GM12878 (cell line): ENCODE measurements at regions of chr1 and their contacts with region 1.

Region 1: GRCh38 chr1:61741711-61742619 is at the start of gene PATJ:
- DNase-seq: no peak
- ATAC-seq: peak; percentile 91
- H3K4me3 ChIP-seq: peak within 1 kb of the TSS; percentile 83
- H3K27ac ChIP-seq: no peak within 1 kb of the TSS
- H3K4me1 ChIP-seq: peaks cover 6% of the 10 kb centered on the region
- H3K27me3 ChIP-seq: no peaks in the 10 kb centered on the region
- CTCF ChIP-seq: no peak
- EP300 ChIP-seq: no peak
- POLR2A ChIP-seq: peak; percentile 68
- RAD21 ChIP-seq: no peak
- polyA plus RNA-seq, gene PATJ: 2.8 to 4.5 TPM

Region 2: DNA sequence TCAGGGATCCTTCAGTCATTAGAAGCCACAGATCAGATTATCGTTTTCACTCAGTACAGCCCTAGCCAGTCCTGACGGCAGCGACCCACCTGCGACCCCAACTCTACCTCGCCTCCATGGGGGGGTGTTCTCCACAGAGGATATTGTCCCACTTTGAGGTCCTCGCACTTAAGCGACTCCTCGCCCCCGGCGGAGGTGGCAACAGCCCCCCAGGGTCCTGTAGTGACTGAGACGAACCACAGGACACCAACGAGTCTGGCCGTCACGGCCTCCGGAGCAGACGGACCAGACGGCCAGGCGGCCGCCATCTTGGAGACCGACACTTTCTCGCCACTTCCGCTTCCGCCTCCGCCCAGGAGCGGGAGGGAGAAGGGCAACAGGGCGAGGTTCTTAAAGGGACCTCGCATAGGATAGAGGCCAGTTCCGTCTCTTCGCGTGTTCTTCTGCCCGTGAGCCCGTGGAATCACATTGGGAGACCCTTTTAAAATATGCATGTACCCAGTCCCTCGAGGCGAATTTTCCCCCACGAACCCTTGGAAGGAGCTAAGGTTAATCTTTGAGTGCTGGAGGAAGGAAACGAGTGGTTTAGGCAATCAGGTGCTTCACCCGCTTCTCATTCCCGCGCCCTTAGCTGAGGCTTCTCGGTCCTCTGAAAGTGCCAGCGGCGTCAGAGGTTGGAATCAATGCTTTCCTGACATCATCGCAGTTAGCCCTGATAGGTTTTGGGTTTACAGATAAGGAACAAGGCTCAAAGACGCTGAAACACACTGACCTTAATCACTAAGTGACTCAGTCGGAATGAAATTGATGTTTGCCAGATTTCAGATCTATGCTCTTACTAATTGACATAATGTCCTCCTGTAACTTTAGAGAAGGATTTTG is 16.9 kb before region 1 on chr1 and contains the start of gene TM2D1:
- CTCF ChIA-PET with region 1: interaction called, 3 read pairs
- POLR2A ChIA-PET with region 1: interaction called, 3 read pairs
- RAD21 ChIA-PET with region 1: no interaction called
- SMC1A ChIA-PET with region 1: no interaction called
- in situ Hi-C with region 1: no loop called
- intact Hi-C with region 1: loop called (anchors 2 kb)
- DNase-seq: peak; percentile 68
- ATAC-seq: peak; percentile 99
- H3K4me3 ChIP-seq: peak within 1 kb of the TSS; percentile 94
- H3K27ac ChIP-seq: peak within 1 kb of the TSS; percentile 96
- H3K4me1 ChIP-seq: no peaks in the 10 kb centered on the region
- H3K27me3 ChIP-seq: no peaks in the 10 kb centered on the region
- CTCF ChIP-seq: no peak
- EP300 ChIP-seq: no peak
- POLR2A ChIP-seq: peak; percentile 100
- RAD21 ChIP-seq: no peak
- polyA plus RNA-seq, gene TM2D1: 32.0 to 37.9 TPM